Right ventricle myocardium superior (tissue), 1 donor: ENCODE measurements at regions of chr4 and their contacts with region 1.

Region 1: GRCh38 chr4:110516106-110516922 is 40.4 kb downstream of the ENPEP start:
- DNase-seq: peak; percentile 51
- ATAC-seq: peak; percentile 89

Region 2: DNA sequence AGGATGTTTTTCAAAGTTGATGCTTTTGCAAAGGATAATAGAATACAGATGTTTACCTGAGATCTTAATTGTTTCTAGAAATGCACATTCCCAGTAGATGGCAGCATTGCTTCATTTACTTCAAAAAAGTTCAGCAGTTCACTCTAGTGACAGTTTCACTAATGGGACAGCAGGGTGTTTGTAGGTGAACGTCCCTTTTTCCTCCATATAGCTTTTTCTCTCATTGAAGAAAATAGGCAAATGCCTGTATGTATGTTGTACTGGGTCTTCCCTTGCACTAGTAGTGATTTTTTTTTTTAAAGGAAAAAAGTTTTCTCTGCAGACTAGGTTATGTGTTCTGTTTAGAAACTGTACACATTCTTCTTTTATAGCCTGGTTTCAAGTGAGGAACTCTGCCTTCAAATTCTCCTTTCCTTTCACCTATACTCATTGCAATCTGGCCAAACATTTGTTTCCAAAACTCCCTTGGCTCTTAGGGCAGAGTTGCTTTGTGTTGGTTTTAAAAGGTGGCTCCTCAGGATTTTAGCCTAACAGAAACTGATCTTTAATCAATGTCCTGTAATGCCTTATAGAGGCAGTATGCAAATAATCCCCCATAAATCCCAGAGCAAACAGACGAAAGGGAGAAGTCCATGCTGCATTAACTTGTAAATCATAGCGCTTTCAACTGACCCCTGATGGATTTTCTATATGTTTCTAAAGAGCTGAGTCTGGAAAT is 517.3 kb before region 1 on chr4:
- intact Hi-C with region 1: loop called (anchors 5 kb)
- DNase-seq: no peak
- ATAC-seq: peak; percentile 68

Region 3: GRCh38 chr4:110310795-110311194 is 205.5 kb before region 1 on chr4:
- intact Hi-C with region 1: loop called (anchors 10 kb)
- DNase-seq: no peak
- ATAC-seq: no peak